ENCODE measurements at regions of chr6 and their contacts with region 1.

Region 1: GRCh38 chr6:167077241-167077932 is 45.5 kb upstream of the CCR6 start:
- DNase-seq: no peak
- H3K4me3 ChIP-seq: no peak overlapping the region
- H3K27ac ChIP-seq: no peak overlapping the region
- H3K4me1 ChIP-seq: no peaks in the 10 kb centered on the region
- H3K27me3 ChIP-seq: no peaks in the 10 kb centered on the region
- CTCF ChIP-seq: no peak
- POLR2A ChIP-seq: no peak

Region 2: DNA sequence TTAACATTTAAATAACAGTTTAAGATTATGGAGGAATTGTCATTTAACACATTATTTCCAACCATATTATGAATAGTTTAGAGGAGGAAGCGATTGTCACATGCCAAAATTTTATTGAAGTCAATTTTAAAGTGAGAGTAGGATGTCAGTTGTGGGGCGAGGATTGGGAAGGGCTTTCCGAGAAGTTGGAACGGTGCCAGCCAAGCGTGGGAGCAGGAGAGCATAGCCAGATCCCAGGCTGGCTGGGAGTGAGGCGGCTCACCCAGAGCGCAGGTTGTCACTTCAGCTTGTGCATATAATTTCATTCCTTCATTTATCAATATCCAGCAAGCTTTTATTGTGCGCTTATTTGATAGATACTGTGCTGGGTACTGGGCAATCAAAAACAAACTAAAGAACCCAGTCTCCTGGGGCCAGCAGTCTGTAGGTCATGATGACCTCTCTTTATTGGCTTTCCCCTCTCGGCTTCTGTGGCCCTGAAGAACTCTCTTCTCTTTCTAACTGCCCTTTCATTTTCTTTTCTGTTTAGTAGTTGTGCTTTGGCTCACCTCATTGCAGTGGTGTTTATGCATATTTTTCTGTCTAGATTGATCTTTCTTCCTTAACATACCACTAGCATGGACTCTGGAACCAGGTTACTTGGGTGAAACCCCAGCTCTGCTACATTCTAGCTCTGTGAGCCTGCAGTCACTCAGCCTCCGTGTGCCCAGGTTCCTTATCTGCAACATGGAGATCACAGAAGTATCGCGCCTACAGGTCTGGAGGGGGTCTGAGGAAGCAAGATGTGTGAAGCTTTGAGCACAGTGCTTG is 71.8 kb before region 1 on chr6:
- intact Hi-C with region 1: loop called (anchors 2 kb)
- DNase-seq: no peak
- H3K4me3 ChIP-seq: peak overlapping the region in 1 of 3 donors; percentile 7
- H3K27ac ChIP-seq: no peak overlapping the region
- H3K4me1 ChIP-seq: peaks cover 0 to 11% of the 10 kb centered on the region in 2 donors
- H3K27me3 ChIP-seq: no peaks in the 10 kb centered on the region
- CTCF ChIP-seq: no peak
- POLR2A ChIP-seq: no peak

Region 3: GRCh38 chr6:167044696-167045095 is 32.7 kb before region 1 on chr6:
- intact Hi-C with region 1: no loop called
- DNase-seq: no peak
- H3K4me3 ChIP-seq: no peak overlapping the region
- H3K27ac ChIP-seq: no peak overlapping the region
- H3K4me1 ChIP-seq: no peaks in the 10 kb centered on the region
- H3K27me3 ChIP-seq: no peaks in the 10 kb centered on the region
- CTCF ChIP-seq: no peak
- POLR2A ChIP-seq: no peak

Measured in breast epithelium (tissue), 4 donors.